Endothelial cell of umbilical vein (primary cell): ENCODE measurements at regions of chrX and their contacts with region 1.

Region 1: GRCh38 chrX:136209016-136209738 is 42.0 kb downstream of the MAP7D3 start:
- DNase-seq: peak; percentile 55
- H3K4me3 ChIP-seq: no peak overlapping the region
- H3K27ac ChIP-seq: no peak overlapping the region
- H3K4me1 ChIP-seq: peaks cover 6% of the 10 kb centered on the region
- H3K27me3 ChIP-seq: no peaks in the 10 kb centered on the region
- CTCF ChIP-seq: peak; percentile 36 to 62
- POLR2A ChIP-seq: no peak

Region 2: DNA sequence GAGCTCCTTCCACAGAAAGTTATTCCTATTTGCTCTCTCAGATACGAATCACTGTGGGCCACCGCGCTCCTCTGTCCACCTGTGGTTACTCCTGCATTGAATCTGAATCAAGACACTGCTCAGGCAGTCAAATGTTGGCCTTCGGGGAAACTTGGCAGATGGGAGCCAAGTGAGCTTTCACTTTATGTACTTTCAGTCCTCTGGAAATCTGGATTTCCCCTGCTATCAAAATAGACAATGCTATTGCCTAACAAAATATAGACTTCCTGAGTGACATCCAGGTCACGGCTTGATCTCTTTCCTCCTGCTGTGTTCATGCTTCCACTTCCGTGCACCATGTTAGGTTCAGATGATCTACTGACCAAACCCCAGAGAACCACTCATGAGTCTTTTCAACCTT is 18.0 kb before region 1 on chrX:
- CTCF ChIA-PET with region 1: interaction called, 15 read pairs
- POLR2A ChIA-PET with region 1: no interaction called
- dilution Hi-C with region 1: no loop called
- intact Hi-C with region 1: no loop called
- DNase-seq: peak; percentile 65
- H3K4me3 ChIP-seq: no peak overlapping the region
- H3K27ac ChIP-seq: no peak overlapping the region
- H3K4me1 ChIP-seq: peaks cover 39% of the 10 kb centered on the region
- H3K27me3 ChIP-seq: no peaks in the 10 kb centered on the region
- CTCF ChIP-seq: no peak
- POLR2A ChIP-seq: no peak